B cell (primary cell): ENCODE measurements at regions of chr1 and their contacts with region 1.

Region 1: DNA sequence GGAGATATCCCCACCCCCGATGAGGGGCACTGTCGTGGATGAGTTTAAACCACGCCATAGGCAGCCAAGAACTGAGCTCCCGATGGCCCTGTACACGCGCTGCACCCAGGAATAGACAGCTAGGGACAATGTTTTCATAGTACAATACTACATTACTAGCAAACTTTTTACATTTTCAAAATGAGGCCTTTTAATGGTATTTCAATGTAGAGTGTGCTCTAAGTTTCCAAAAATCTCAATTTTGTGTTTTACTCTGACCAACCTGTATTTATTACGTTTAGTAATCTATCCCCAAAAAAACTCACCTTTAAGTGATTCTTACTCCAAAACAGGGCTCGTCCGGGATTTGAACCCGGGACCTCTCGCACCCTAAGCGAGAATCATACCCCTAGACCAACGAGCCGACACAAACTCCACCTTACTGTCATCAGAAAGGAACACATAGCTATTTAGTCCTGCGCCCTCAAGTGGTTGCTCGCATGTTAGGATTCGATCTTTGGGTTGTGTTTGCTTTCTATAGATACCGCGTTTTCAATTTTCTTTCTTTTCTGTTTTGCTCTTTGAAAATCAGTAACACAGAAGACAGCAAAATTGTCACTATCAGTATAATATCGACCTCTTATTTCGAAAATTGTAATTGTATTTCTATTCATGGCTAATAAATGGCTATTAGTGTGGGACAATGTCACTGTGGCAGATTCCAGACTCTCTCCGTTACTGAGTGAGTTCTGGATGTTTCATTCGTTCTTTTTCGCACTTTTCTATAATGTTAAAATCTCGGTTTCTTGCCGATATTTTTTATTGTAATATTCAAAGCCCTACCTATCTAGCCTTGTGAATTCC is 6.4 kb upstream of the MPZL1 start:
- DNase-seq: peak; percentile 94
- ATAC-seq: peak; percentile 58
- H3K4me3 ChIP-seq: peak overlapping the region; percentile 80 to 94 (median 91)
- H3K4me3 Mint-ChIP-seq: peak overlapping the region; percentile 93
- H3K27ac ChIP-seq: peak overlapping the region in 1 of 2 donors; percentile 54
- H3K27ac Mint-ChIP-seq: peak overlapping the region; percentile 98
- H3K4me1 ChIP-seq: peaks cover 37 to 41% of the 10 kb centered on the region in 2 donors
- H3K4me1 Mint-ChIP-seq: peaks cover 44% of the 10 kb centered on the region
- H3K27me3 ChIP-seq: no peaks in the 10 kb centered on the region
- H3K27me3 Mint-ChIP-seq: no peaks in the 10 kb centered on the region
- CTCF ChIP-seq: peak; percentile 85

Region 2: GRCh38 chr1:166875734-166876539 is 839.4 kb before region 1 on chr1 and contains the start of gene TADA1:
- CTCF ChIA-PET with region 1: no interaction called
- POLR2A ChIA-PET with region 1: no interaction called
- intact Hi-C with region 1: loop called (anchors 5 kb)
- DNase-seq: peak; percentile 99
- ATAC-seq: peak; percentile 92
- H3K4me3 ChIP-seq: peak within 1 kb of the TSS; percentile 44 to 80 (median 74)
- H3K4me3 Mint-ChIP-seq: peak within 1 kb of the TSS; percentile 98
- H3K27ac ChIP-seq: peak within 1 kb of the TSS; percentile 68 to 86
- H3K27ac Mint-ChIP-seq: peak within 1 kb of the TSS; percentile 99
- H3K4me1 ChIP-seq: peaks cover 12 to 13% of the 10 kb centered on the region in 2 donors
- H3K4me1 Mint-ChIP-seq: peaks cover 38% of the 10 kb centered on the region
- H3K27me3 ChIP-seq: no peaks in the 10 kb centered on the region
- H3K27me3 Mint-ChIP-seq: no peaks in the 10 kb centered on the region
- CTCF ChIP-seq: no peak
- total RNA-seq, gene TADA1: 12.9 and 13.1 TPM in 2 replicates

Region 3: GRCh38 chr1:167454894-167455785 is 260.2 kb before region 1 on chr1:
- CTCF ChIA-PET with region 1: no interaction called
- POLR2A ChIA-PET with region 1: no interaction called
- intact Hi-C with region 1: no loop called
- DNase-seq: peak; percentile 78
- ATAC-seq: peak; percentile 78
- H3K4me3 ChIP-seq: peak overlapping the region; percentile 50 to 82 (median 77)
- H3K4me3 Mint-ChIP-seq: peak overlapping the region; percentile 79
- H3K27ac ChIP-seq: peak overlapping the region in 1 of 2 donors; percentile 66
- H3K27ac Mint-ChIP-seq: no peak overlapping the region
- H3K4me1 ChIP-seq: peaks cover 3 to 23% of the 10 kb centered on the region in 2 donors
- H3K4me1 Mint-ChIP-seq: peaks cover 14% of the 10 kb centered on the region
- H3K27me3 ChIP-seq: peaks cover 0 to 6% (median 0%) of the 10 kb centered on the region in 4 experiments
- H3K27me3 Mint-ChIP-seq: peaks cover 4% of the 10 kb centered on the region
- CTCF ChIP-seq: no peak

Region 4: GRCh38 chr1:167617153-167618147 is 97.9 kb before region 1 on chr1:
- CTCF ChIA-PET with region 1: interaction called, 12 read pairs
- POLR2A ChIA-PET with region 1: interaction called, 4 read pairs
- intact Hi-C with region 1: loop called (anchors 2 kb)
- DNase-seq: peak; percentile 94
- ATAC-seq: peak; percentile 90
- H3K4me3 ChIP-seq: peak overlapping the region; percentile 42 to 81 (median 58)
- H3K4me3 Mint-ChIP-seq: peak overlapping the region; percentile 84
- H3K27ac ChIP-seq: peak overlapping the region; percentile 89 to 97
- H3K27ac Mint-ChIP-seq: peak overlapping the region; percentile 92
- H3K4me1 ChIP-seq: peaks cover 87 to 92% of the 10 kb centered on the region in 2 donors
- H3K4me1 Mint-ChIP-seq: peaks cover 86% of the 10 kb centered on the region
- H3K27me3 ChIP-seq: no peaks in the 10 kb centered on the region
- H3K27me3 Mint-ChIP-seq: no peaks in the 10 kb centered on the region
- CTCF ChIP-seq: no peak

Region 5: DNA sequence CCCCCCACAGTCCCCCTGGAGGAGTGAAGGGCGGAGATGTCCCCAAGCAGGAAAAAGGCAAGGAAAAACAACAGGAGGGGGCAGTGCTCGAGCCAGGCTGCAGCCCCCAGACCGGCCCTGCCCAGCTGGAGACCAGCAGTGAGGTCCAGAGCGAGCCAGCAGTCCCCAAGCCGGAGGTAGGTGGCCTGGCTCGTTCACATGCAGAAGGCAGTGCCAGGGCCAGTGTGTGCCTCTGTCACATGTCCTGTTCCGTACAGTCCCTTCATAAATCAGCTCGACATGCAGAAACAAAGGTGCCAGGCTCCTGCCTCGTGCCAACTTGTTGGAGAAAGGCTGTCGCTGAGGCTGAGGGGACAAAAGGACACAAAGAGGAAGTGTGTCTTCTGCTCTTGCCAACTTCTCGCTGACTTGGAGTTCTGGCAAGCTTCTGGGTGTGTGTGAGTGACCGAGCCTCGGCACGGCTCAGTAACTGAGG is 17.7 kb before region 1 on chr1:
- CTCF ChIA-PET with region 1: interaction called, 10 read pairs
- POLR2A ChIA-PET with region 1: interaction called, 5 read pairs
- intact Hi-C with region 1: no loop called
- DNase-seq: no peak
- ATAC-seq: peak; percentile 15
- H3K4me3 ChIP-seq: no peak overlapping the region
- H3K4me3 Mint-ChIP-seq: no peak overlapping the region
- H3K27ac ChIP-seq: no peak overlapping the region
- H3K27ac Mint-ChIP-seq: peak overlapping the region; percentile 20
- H3K4me1 ChIP-seq: no peaks in the 10 kb centered on the region
- H3K4me1 Mint-ChIP-seq: peaks cover 18% of the 10 kb centered on the region
- H3K27me3 ChIP-seq: no peaks in the 10 kb centered on the region
- H3K27me3 Mint-ChIP-seq: no peaks in the 10 kb centered on the region
- CTCF ChIP-seq: no peak

Region 6: GRCh38 chr1:167763525-167764220 is 48.3 kb after region 1 on chr1:
- CTCF ChIA-PET with region 1: no interaction called
- POLR2A ChIA-PET with region 1: no interaction called
- intact Hi-C with region 1: no loop called
- DNase-seq: no peak
- ATAC-seq: no peak
- H3K4me3 ChIP-seq: no peak overlapping the region
- H3K4me3 Mint-ChIP-seq: no peak overlapping the region
- H3K27ac ChIP-seq: no peak overlapping the region
- H3K27ac Mint-ChIP-seq: no peak overlapping the region
- H3K4me1 ChIP-seq: peaks cover 0 to 4% of the 10 kb centered on the region in 2 donors
- H3K4me1 Mint-ChIP-seq: peaks cover 19% of the 10 kb centered on the region
- H3K27me3 ChIP-seq: no peaks in the 10 kb centered on the region
- H3K27me3 Mint-ChIP-seq: no peaks in the 10 kb centered on the region
- CTCF ChIP-seq: no peak

Region 7: DNA sequence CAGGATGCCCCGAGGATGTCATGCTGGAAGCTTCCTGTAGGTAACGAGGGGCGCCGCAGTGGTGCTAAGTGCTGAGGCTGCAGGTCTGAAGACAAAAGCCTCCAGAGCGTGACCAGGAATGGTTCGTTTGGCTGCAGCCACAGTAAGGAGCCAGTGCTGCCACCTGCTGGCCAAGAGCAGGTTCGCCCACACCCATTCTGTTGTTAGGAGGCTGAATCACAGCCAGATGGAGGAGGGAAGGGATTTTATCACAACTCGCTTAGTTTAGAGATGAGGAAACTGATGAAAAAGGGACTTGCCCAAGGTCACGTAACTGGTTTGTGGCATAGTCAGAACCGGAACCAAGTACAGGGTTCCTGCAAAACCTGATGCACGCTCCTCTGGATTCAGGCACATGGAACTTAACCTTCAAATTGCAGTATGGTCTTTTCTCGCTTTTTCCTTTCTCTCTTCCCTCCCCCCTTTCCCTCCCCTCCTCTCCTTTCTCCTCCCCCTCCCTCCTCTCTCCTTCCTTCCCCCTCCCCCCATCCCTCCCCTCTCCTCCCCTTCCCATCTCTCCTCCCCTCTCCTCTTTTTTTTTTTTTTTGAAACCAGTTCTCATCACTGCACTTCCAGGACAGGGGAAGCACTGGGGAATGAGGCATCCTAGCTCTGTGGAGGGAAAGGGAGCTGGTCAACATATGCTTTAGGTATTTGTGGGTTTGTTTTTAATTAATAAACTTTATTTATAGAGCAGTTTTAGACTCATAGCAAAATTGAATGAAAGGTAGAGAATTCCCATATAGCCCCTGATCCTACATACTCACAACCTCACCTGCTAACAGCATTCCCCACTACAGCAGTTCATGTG is 88.2 kb after region 1 on chr1:
- CTCF ChIA-PET with region 1: interaction called, 4 read pairs
- POLR2A ChIA-PET with region 1: no interaction called
- intact Hi-C with region 1: loop called (anchors 1 kb)
- DNase-seq: peak; percentile 92
- ATAC-seq: peak; percentile 98
- H3K4me3 ChIP-seq: no peak overlapping the region
- H3K4me3 Mint-ChIP-seq: peak overlapping the region; percentile 18
- H3K27ac ChIP-seq: no peak overlapping the region
- H3K27ac Mint-ChIP-seq: peak overlapping the region; percentile 6
- H3K4me1 ChIP-seq: peaks cover 13 to 16% of the 10 kb centered on the region in 2 donors
- H3K4me1 Mint-ChIP-seq: peaks cover 23% of the 10 kb centered on the region
- H3K27me3 ChIP-seq: no peaks in the 10 kb centered on the region
- H3K27me3 Mint-ChIP-seq: no peaks in the 10 kb centered on the region
- CTCF ChIP-seq: peak; percentile 93